CD4-positive, alpha-beta memory T cell (primary cell): ENCODE measurements at regions of chr5 and their contacts with region 1.

Region 1: GRCh38 chr5:151252762-151253604 is at the start of gene GM2A:
- DNase-seq: peak; percentile 96 to 99 (median 97)
- H3K4me3 ChIP-seq: peak within 1 kb of the TSS; percentile 64 to 68
- H3K4me3 Mint-ChIP-seq: peak within 1 kb of the TSS; percentile 89 to 97 (median 94)
- H3K27ac ChIP-seq: peak within 1 kb of the TSS; percentile 66
- H3K27ac Mint-ChIP-seq: peak within 1 kb of the TSS; percentile 86 to 96 (median 94)
- H3K4me1 ChIP-seq: peaks cover 37% of the 10 kb centered on the region
- H3K4me1 Mint-ChIP-seq: peaks cover 17 to 59% (median 36%) of the 10 kb centered on the region in 4 donors
- H3K27me3 ChIP-seq: no peaks in the 10 kb centered on the region
- H3K27me3 Mint-ChIP-seq: no peaks in the 10 kb centered on the region
- total RNA-seq, gene GM2A: 20.4 to 23.1 TPM

Region 2: DNA sequence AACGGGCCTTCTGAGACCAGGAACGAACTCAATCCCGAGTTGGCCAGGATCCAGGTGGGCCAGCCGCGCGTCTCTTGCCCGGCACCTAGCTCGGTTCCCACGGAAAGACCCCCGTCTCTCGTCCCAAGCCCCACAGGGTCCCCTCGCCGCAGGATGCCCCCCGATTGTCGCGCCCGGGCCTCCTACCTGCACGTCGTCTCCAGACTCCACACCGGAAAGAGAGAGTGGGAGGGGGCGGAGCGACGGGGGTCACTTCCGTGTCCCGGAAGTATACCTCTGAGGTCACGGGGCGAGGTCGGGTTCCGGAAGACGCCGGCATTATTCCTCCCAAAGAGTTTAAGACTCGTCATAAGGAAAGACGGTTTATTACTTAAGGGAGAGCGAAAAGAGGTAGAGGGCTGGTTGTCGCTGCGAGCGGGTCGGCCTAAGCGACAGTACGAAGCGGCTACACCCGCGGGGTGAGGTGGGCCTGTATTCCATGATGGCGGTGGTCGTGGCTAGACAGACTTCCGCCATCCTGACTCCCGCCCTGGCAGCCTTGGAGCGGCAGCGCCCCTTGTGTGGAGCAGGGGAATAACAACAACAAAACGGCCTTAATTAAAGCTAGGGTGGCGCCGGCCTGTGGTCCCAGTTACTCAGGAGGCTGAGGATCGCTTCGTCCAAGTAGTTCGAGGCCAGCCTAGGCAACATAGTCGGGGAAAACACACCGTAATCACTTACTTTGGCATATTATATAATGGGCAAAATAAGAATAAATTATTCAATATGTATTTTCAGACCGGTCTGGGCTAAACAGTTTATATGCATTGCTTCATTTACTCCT is 803.3 kb before region 1 on chr5 and contains the start of gene RPS14:
- CTCF ChIA-PET with region 1: interaction called, 3 read pairs
- POLR2A ChIA-PET with region 1: interaction called, 11 read pairs
- intact Hi-C with region 1: no loop called
- DNase-seq: peak; percentile 96 to 98 (median 97)
- H3K4me3 ChIP-seq: peak within 1 kb of the TSS; percentile 87 to 99
- H3K4me3 Mint-ChIP-seq: peak within 1 kb of the TSS; percentile 92 to 100 (median 98)
- H3K27ac ChIP-seq: peak within 1 kb of the TSS; percentile 99
- H3K27ac Mint-ChIP-seq: peak within 1 kb of the TSS; percentile 99 to 100 (median 100)
- H3K4me1 ChIP-seq: peaks cover 28% of the 10 kb centered on the region
- H3K4me1 Mint-ChIP-seq: peaks cover 15 to 46% (median 36%) of the 10 kb centered on the region in 4 donors
- H3K27me3 ChIP-seq: no peaks in the 10 kb centered on the region
- H3K27me3 Mint-ChIP-seq: no peaks in the 10 kb centered on the region
- total RNA-seq, gene RPS14: 5,260 to 5,575 TPM

Region 3: GRCh38 chr5:151080623-151081430 is 172.2 kb before region 1 on chr5 and contains the start of gene TNIP1:
- CTCF ChIA-PET with region 1: no interaction called
- POLR2A ChIA-PET with region 1: interaction called, 9 read pairs
- intact Hi-C with region 1: loop called (anchors 5 kb)
- DNase-seq: peak; percentile 91 to 97 (median 93)
- H3K4me3 ChIP-seq: peak within 1 kb of the TSS; percentile 61 to 87
- H3K4me3 Mint-ChIP-seq: peak within 1 kb of the TSS; percentile 88 to 98 (median 94)
- H3K27ac ChIP-seq: peak within 1 kb of the TSS; percentile 99
- H3K27ac Mint-ChIP-seq: peak within 1 kb of the TSS; percentile 76 to 98 (median 96)
- H3K4me1 ChIP-seq: peaks cover 89% of the 10 kb centered on the region
- H3K4me1 Mint-ChIP-seq: peaks cover 69 to 94% (median 76%) of the 10 kb centered on the region in 4 donors
- H3K27me3 ChIP-seq: no peaks in the 10 kb centered on the region
- H3K27me3 Mint-ChIP-seq: no peaks in the 10 kb centered on the region
- total RNA-seq, gene TNIP1: 227 to 233 TPM

Region 4: DNA sequence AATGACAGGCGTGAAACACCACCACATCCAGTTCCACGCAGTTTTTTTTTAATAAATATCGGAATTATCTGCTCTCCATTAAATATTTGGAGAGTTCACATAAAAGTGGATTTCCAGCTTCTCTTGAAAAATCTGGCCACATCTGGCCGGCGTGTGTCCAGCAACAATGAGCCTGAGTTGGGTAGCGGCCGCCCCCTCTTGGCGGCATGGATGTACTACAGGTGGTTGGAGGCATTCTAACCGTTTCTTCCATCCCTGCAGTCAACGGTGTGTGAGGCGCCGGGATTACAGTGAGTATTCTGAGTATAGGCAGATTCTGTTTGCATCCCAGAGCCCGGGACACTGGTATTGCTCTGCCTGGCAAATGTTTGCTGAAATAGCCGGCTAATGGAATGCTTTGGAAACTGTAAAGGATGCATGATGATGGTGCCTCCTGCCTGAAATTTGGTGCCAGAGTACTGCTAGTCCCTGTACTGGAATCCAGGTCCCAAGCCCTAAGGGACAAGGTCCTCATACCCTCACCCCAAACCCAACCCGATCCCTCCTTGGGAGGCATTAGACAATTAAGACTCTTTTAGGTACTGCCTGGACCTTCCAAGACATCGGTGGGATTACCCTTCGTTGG is 13.6 kb before region 1 on chr5:
- CTCF ChIA-PET with region 1: interaction called, 43 read pairs
- POLR2A ChIA-PET with region 1: interaction called, 16 read pairs
- intact Hi-C with region 1: no loop called
- DNase-seq: peak in 4 of 5 donors; percentile 40 to 60 (median 48)
- H3K4me3 ChIP-seq: no peak overlapping the region
- H3K4me3 Mint-ChIP-seq: no peak overlapping the region
- H3K27ac ChIP-seq: no peak overlapping the region
- H3K27ac Mint-ChIP-seq: peak overlapping the region in 3 of 7 donors; percentile 35 to 81 (median 61)
- H3K4me1 ChIP-seq: peaks cover 28% of the 10 kb centered on the region
- H3K4me1 Mint-ChIP-seq: peaks cover 17 to 24% (median 18%) of the 10 kb centered on the region in 4 donors
- H3K27me3 ChIP-seq: no peaks in the 10 kb centered on the region
- H3K27me3 Mint-ChIP-seq: no peaks in the 10 kb centered on the region

Region 5: GRCh38 chr5:151288180-151288579 is 35.2 kb after region 1 on chr5:
- CTCF ChIA-PET with region 1: no interaction called
- POLR2A ChIA-PET with region 1: no interaction called
- intact Hi-C with region 1: no loop called
- DNase-seq: no peak
- H3K4me3 ChIP-seq: no peak overlapping the region
- H3K4me3 Mint-ChIP-seq: no peak overlapping the region
- H3K27ac ChIP-seq: no peak overlapping the region
- H3K27ac Mint-ChIP-seq: no peak overlapping the region
- H3K4me1 ChIP-seq: no peaks in the 10 kb centered on the region
- H3K4me1 Mint-ChIP-seq: peaks cover 0 to 4% (median 0%) of the 10 kb centered on the region in 4 donors
- H3K27me3 ChIP-seq: no peaks in the 10 kb centered on the region
- H3K27me3 Mint-ChIP-seq: no peaks in the 10 kb centered on the region